CD8-positive, alpha-beta T cell (primary cell): ENCODE measurements at regions of chr9 and their contacts with region 1.

Region 1: GRCh38 chr9:118401546-118401945 is 697.3 kb downstream of the TLR4 start:
- DNase-seq: no peak
- ATAC-seq: no peak
- H3K4me3 ChIP-seq: no peak overlapping the region
- H3K4me3 Mint-ChIP-seq: no peak overlapping the region
- H3K27ac ChIP-seq: no peak overlapping the region
- H3K27ac Mint-ChIP-seq: no peak overlapping the region
- H3K4me1 ChIP-seq: no peaks in the 10 kb centered on the region
- H3K4me1 Mint-ChIP-seq: no peaks in the 10 kb centered on the region
- H3K27me3 ChIP-seq: no peaks in the 10 kb centered on the region
- H3K27me3 Mint-ChIP-seq: no peaks in the 10 kb centered on the region
- CTCF ChIP-seq: no peak

Region 2: GRCh38 chr9:118262191-118262590 is 139.4 kb before region 1 on chr9:
- CTCF ChIA-PET with region 1: no interaction called
- POLR2A ChIA-PET with region 1: no interaction called
- intact Hi-C with region 1: no loop called
- DNase-seq: no peak
- ATAC-seq: no peak
- H3K4me3 ChIP-seq: no peak overlapping the region
- H3K4me3 Mint-ChIP-seq: no peak overlapping the region
- H3K27ac ChIP-seq: no peak overlapping the region
- H3K27ac Mint-ChIP-seq: no peak overlapping the region
- H3K4me1 ChIP-seq: no peaks in the 10 kb centered on the region
- H3K4me1 Mint-ChIP-seq: no peaks in the 10 kb centered on the region
- H3K27me3 ChIP-seq: no peaks in the 10 kb centered on the region
- H3K27me3 Mint-ChIP-seq: no peaks in the 10 kb centered on the region
- CTCF ChIP-seq: no peak

Region 3: DNA sequence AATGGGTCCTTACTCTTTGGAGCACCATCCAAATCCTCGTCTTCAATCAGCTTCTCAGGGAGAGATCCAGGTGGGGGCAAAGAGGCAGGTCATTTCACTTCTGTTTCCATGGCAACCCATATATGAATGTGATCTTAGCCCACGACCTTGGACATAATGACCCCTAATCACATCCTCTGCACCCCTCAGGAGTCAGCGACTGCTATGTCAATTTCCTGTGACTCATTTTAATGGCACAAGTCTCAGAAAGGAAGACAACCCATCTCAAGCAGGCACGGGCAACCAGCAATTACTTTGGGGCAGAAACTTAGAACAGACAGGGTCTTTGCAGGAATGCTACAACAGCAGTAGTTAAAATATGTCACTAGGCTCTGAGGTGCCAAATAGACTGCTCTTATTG is 106.1 kb before region 1 on chr9:
- CTCF ChIA-PET with region 1: no interaction called
- POLR2A ChIA-PET with region 1: no interaction called
- intact Hi-C with region 1: no loop called
- DNase-seq: no peak
- ATAC-seq: no peak
- H3K4me3 ChIP-seq: no peak overlapping the region
- H3K4me3 Mint-ChIP-seq: no peak overlapping the region
- H3K27ac ChIP-seq: no peak overlapping the region
- H3K27ac Mint-ChIP-seq: no peak overlapping the region
- H3K4me1 ChIP-seq: no peaks in the 10 kb centered on the region
- H3K4me1 Mint-ChIP-seq: no peaks in the 10 kb centered on the region
- H3K27me3 ChIP-seq: no peaks in the 10 kb centered on the region
- H3K27me3 Mint-ChIP-seq: no peaks in the 10 kb centered on the region
- CTCF ChIP-seq: no peak

Region 4: GRCh38 chr9:118423021-118423420 is 21.5 kb after region 1 on chr9:
- CTCF ChIA-PET with region 1: no interaction called
- POLR2A ChIA-PET with region 1: no interaction called
- intact Hi-C with region 1: loop called in 1 of 2 experiments (anchors 1 kb)
- DNase-seq: no peak
- ATAC-seq: no peak
- H3K4me3 ChIP-seq: no peak overlapping the region
- H3K4me3 Mint-ChIP-seq: no peak overlapping the region
- H3K27ac ChIP-seq: no peak overlapping the region
- H3K27ac Mint-ChIP-seq: no peak overlapping the region
- H3K4me1 ChIP-seq: no peaks in the 10 kb centered on the region
- H3K4me1 Mint-ChIP-seq: no peaks in the 10 kb centered on the region
- H3K27me3 ChIP-seq: no peaks in the 10 kb centered on the region
- H3K27me3 Mint-ChIP-seq: no peaks in the 10 kb centered on the region
- CTCF ChIP-seq: no peak

Region 5: DNA sequence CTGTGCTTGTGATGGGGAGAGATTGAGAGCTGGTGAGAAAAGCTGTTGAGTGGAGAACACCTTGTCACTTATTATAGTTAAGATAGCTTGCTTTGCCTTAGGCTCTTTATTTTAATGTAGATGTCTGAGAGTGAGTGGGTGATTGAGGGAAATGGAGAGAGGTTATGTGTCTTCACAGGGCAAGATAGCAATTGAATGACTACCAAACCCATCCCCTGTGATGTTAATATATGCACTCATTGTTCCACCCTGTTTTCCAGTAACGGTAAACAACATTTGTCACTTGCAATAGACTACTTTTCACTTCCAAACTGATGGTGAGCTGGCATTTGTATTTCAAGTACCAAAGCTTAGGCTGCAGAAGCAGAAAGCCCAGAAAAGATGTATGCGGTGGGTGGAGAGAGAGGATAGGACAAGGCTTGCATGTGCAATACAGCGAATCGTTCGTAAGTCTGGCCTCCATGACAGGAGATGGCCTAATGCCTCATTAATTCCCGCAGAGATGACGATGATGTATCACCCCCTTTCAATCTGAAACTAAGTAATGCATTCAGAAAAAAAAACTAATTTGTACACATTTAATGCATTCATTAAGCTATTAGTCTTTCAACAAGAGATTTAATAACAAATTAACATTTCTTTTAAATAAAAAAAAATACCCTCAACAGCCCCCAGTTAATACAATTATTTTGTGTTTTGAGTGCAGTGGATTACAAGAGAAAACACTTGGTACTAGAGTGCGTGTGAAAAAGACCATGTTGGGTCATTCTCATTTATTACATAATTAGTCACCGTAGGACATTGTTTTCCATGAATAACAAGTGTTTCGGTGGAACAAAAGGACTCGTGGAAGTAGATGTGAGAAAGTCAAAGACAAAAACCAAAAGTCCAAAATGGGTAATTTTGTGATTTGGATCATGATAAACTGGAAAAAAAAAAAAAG is 268.7 kb after region 1 on chr9:
- CTCF ChIA-PET with region 1: no interaction called
- POLR2A ChIA-PET with region 1: no interaction called
- intact Hi-C with region 1: no loop called
- DNase-seq: no peak
- ATAC-seq: no peak
- H3K4me3 ChIP-seq: no peak overlapping the region
- H3K4me3 Mint-ChIP-seq: no peak overlapping the region
- H3K27ac ChIP-seq: no peak overlapping the region
- H3K27ac Mint-ChIP-seq: no peak overlapping the region
- H3K4me1 ChIP-seq: no peaks in the 10 kb centered on the region
- H3K4me1 Mint-ChIP-seq: no peaks in the 10 kb centered on the region
- H3K27me3 ChIP-seq: no peaks in the 10 kb centered on the region
- H3K27me3 Mint-ChIP-seq: no peaks in the 10 kb centered on the region
- CTCF ChIP-seq: no peak